ENCODE measurements at regions of chr20 and their contacts with region 1.

Region 1: DNA sequence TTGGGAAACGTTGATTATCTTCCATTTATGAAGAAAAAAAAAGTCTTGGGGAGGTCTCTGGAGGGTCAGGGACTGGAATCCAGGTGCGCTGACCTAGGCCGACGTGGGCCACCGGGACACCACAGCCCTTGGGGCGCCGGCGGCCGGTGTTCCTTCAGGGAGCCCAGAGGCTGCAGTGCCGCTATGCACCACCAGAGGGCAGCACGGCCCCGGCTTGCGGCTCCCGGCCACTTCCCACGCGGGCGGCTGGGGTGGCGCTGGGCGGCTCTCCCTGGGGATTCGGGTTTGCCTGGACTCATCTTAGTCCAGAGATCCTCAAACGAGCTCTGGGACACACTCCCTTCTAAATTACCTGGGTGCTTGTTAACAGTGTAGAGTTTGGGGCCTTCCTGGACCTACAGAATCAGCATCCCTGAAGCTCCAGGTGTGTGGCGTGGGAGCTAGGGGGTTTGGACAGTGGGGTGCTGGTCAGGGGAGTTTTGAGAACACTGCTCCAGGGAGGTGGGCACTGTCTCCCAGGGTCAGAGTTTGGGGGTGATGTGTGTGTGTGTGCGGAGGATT is 23.0 kb upstream of the GTSF1L start:
- DNase-seq: peak; percentile 13
- ATAC-seq: peak; percentile 45
- H3K4me3 ChIP-seq: no peak overlapping the region
- H3K27ac ChIP-seq: peak overlapping the region; percentile 84
- H3K4me1 ChIP-seq: peaks cover 34% of the 10 kb centered on the region
- H3K27me3 ChIP-seq: no peaks in the 10 kb centered on the region
- CTCF ChIP-seq: peak; percentile 96 to 99 (median 98); a peak in 5 of 6 replicates
- EP300 ChIP-seq: no peak
- POLR2A ChIP-seq: no peak
- RAD21 ChIP-seq: peak; percentile 95

Region 2: DNA sequence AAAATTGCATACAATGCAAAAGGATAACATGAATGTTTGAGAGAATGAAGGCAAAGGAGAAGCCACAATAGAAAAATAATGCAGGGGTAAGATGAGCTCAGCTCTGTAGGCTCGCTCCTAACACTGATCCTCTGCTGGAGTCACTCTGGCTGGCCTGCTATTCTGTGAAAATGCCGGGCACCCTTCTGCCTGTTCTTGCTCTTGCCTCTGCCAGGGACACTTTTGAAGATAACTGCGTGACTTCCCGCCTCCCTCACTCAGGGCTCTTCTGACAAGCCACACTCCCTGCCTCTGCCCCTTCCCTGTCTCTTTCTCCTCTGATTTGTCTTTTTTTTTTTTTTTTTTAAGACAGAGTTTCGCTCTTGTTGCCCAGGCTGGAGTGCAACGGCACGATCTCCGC is 118.2 kb before region 1 on chr20:
- CTCF ChIA-PET with region 1: no interaction called
- POLR2A ChIA-PET with region 1: no interaction called
- RAD21 ChIA-PET with region 1: no interaction called
- SMC1A ChIA-PET with region 1: no interaction called
- in situ Hi-C with region 1: no loop called
- intact Hi-C with region 1: no loop called
- DNase-seq: no peak
- ATAC-seq: no peak
- H3K4me3 ChIP-seq: no peak overlapping the region
- H3K27ac ChIP-seq: no peak overlapping the region
- H3K4me1 ChIP-seq: no peaks in the 10 kb centered on the region
- H3K27me3 ChIP-seq: no peaks in the 10 kb centered on the region
- CTCF ChIP-seq: no peak
- EP300 ChIP-seq: no peak
- POLR2A ChIP-seq: no peak
- RAD21 ChIP-seq: no peak

Region 3: DNA sequence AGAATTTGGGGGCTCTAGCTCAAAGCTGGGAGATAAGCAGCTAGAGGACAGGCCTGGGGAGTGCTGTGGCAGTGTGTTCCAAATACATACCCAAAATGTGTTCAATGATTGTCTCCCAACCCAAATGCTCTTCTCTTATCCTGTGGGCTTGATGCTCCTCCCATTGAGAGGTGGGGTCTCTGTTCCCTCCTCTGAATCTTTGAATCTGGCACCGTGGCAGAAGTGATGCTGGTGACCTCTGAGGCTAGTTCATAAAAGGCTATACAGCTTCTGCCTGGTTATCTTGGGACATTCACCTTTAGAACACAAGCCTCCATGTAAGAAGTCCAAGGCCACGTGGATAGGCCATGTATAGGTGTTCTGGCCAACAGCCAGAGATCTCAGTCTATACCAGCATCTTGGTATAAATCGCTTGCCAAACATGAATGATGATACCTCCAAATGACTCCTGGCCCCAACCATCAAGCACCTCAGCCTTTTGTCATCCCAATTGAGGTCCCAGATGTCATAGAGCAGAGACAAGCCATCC is 98.8 kb before region 1 on chr20:
- CTCF ChIA-PET with region 1: no interaction called
- POLR2A ChIA-PET with region 1: no interaction called
- RAD21 ChIA-PET with region 1: no interaction called
- SMC1A ChIA-PET with region 1: no interaction called
- in situ Hi-C with region 1: no loop called
- intact Hi-C with region 1: no loop called
- DNase-seq: no peak
- ATAC-seq: no peak
- H3K4me3 ChIP-seq: no peak overlapping the region
- H3K27ac ChIP-seq: no peak overlapping the region
- H3K4me1 ChIP-seq: peaks cover 2% of the 10 kb centered on the region; the same call in 1 of the 2 replicates
- H3K27me3 ChIP-seq: no peaks in the 10 kb centered on the region
- CTCF ChIP-seq: no peak
- EP300 ChIP-seq: no peak
- POLR2A ChIP-seq: no peak
- RAD21 ChIP-seq: no peak

Region 4: GRCh38 chr20:43681468-43681942 is 68.3 kb before region 1 on chr20:
- CTCF ChIA-PET with region 1: interaction called, 5 read pairs
- POLR2A ChIA-PET with region 1: no interaction called
- RAD21 ChIA-PET with region 1: interaction called, 11 read pairs
- SMC1A ChIA-PET with region 1: interaction called, 4 read pairs
- in situ Hi-C with region 1: no loop called
- intact Hi-C with region 1: no loop called
- DNase-seq: peak; percentile 21
- ATAC-seq: peak; percentile 70
- H3K4me3 ChIP-seq: peak overlapping the region; percentile 68
- H3K27ac ChIP-seq: peak overlapping the region; percentile 89
- H3K4me1 ChIP-seq: peaks cover 32% of the 10 kb centered on the region
- H3K27me3 ChIP-seq: no peaks in the 10 kb centered on the region
- CTCF ChIP-seq: peak; percentile 21 to 42 (median 40); a peak in 5 of 6 replicates
- EP300 ChIP-seq: no peak
- POLR2A ChIP-seq: 0 out of 2 replicates have a peak, but pooled peaks have one; percentile 23
- RAD21 ChIP-seq: 0 out of 2 replicates have a peak, but pooled peaks have one; percentile 14

Region 5: GRCh38 chr20:43799150-43799711 is 49.4 kb after region 1 on chr20:
- CTCF ChIA-PET with region 1: interaction called, 4 read pairs
- POLR2A ChIA-PET with region 1: no interaction called
- RAD21 ChIA-PET with region 1: interaction called, 12 read pairs
- SMC1A ChIA-PET with region 1: interaction called, 10 read pairs
- in situ Hi-C with region 1: no loop called
- intact Hi-C with region 1: no loop called
- DNase-seq: no peak
- ATAC-seq: peak; percentile 88
- H3K4me3 ChIP-seq: no peak overlapping the region
- H3K27ac ChIP-seq: peak overlapping the region; percentile 7; the same call in 1 of the 2 replicates
- H3K4me1 ChIP-seq: peaks cover 23% of the 10 kb centered on the region
- H3K27me3 ChIP-seq: no peaks in the 10 kb centered on the region
- CTCF ChIP-seq: no peak
- EP300 ChIP-seq: no peak
- POLR2A ChIP-seq: no peak
- RAD21 ChIP-seq: no peak

Region 6: GRCh38 chr20:43914311-43915210 is 164.7 kb after region 1 on chr20 and contains the start of gene TOX2:
- CTCF ChIA-PET with region 1: interaction called, 40 read pairs
- POLR2A ChIA-PET with region 1: interaction called, 9 read pairs
- RAD21 ChIA-PET with region 1: interaction called, 57 read pairs
- SMC1A ChIA-PET with region 1: interaction called, 53 read pairs
- in situ Hi-C with region 1: no loop called
- intact Hi-C with region 1: loop called (anchors 2 kb)
- DNase-seq: no peak
- ATAC-seq: peak; percentile 43
- H3K4me3 ChIP-seq: peak within 1 kb of the TSS; percentile 68; the same call in 1 of the 2 replicates
- H3K27ac ChIP-seq: peak within 1 kb of the TSS; percentile 28; the same call in 1 of the 2 replicates
- H3K4me1 ChIP-seq: peaks cover 18% of the 10 kb centered on the region
- H3K27me3 ChIP-seq: peaks cover 0 to 4% of the 10 kb centered on the region in 2 experiments; a peak in 2 of 4 replicates
- CTCF ChIP-seq: no peak
- EP300 ChIP-seq: no peak
- POLR2A ChIP-seq: no peak; the same call in 1 of the 2 replicates
- RAD21 ChIP-seq: no peak
- polyA plus RNA-seq, gene TOX2: 2.6 to 6.2 TPM

Region 7: DNA sequence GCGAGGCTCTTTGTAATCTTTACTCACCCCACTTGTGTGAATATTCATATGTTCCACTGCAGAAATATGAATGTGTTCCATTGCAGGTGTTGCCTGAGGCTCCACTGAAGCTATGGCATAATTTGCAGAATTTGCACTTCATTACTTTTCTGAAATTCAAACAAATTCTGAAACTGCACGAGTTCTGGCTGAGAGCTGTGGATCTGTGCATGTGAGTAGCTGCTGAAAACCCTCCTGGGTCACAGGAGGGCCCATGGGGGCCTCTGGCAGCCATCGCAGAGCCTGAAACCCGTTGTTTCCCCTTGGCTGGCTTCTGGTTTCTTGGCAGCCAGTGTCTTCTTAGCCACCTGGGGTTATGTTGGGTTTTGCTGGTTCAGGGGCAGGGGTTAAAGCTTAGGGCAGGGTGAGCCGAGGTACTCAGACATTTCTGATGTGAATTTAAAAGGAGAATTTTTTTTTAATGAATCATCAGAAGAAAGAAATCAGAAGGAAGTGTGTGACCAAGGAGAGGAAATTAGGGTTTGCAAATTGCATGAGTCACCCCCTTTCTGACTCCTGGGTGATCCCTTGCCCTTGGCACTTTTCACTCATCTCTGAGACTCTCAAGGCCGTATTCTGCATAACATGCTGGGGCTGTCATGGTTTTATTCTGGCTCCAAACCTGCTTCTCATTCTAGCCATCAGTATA is 205.4 kb after region 1 on chr20:
- CTCF ChIA-PET with region 1: interaction called, 7 read pairs
- POLR2A ChIA-PET with region 1: no interaction called
- RAD21 ChIA-PET with region 1: interaction called, 24 read pairs
- SMC1A ChIA-PET with region 1: interaction called, 25 read pairs
- in situ Hi-C with region 1: no loop called
- intact Hi-C with region 1: loop called (anchors 2 kb)
- DNase-seq: peak; percentile 73
- ATAC-seq: peak; percentile 85
- H3K4me3 ChIP-seq: 0 out of 2 replicates have a peak overlapping the region, but pooled peaks have one; percentile 11
- H3K27ac ChIP-seq: peak overlapping the region; percentile 9
- H3K4me1 ChIP-seq: peaks cover 40% of the 10 kb centered on the region
- H3K27me3 ChIP-seq: no peaks in the 10 kb centered on the region
- CTCF ChIP-seq: no peak
- EP300 ChIP-seq: 0 out of 4 replicates have a peak, but pooled peaks of 1 of the 2 experiments have one; percentile 5
- POLR2A ChIP-seq: no peak
- RAD21 ChIP-seq: no peak

Region 8: DNA sequence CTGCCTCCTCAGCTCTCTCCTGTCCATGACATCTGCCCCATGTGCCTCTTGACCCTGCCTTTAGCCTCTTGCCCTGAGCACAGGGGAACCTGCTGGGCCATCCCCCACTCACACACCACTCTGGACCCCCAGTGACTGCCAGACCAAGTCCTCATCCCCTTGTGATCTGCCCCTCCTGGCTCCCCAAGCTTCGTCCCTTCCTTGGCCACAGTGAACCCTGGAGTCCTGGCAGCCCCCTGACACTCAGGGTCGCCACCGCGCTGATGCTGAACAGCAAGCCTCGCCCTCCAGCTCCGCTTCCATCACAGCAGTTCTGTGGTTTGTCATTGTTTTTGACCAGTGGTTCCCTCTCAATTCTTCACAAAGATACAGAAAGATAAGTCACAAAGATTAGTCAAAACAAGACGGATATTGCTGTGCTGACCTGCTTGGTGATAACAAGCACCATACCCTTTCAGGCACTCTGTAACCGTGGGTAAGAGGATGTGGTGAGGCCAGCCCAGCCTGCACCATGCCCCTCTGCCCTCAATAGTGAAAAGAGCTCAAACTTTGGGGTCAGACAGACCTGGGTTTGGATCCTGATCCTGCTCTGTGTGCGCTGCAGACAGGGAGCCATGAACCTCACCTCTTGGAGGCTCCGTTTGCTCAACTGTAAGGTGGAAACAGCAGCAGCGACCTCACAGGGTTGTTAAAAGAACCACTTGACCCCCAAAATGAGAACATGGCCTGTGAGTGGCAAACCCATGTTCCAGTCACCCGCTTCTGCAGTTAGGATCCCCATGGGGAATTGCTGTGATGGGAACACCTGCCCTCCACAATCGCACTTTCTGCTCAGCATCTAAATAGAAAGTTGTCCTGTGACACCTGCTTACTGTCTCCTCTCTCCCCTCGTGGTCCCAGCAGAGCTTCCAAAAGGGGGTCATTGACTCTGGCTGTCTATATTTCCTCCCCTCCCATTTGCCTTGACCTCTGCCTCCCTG is 279.3 kb after region 1 on chr20:
- CTCF ChIA-PET with region 1: interaction called, 5 read pairs
- POLR2A ChIA-PET with region 1: no interaction called
- RAD21 ChIA-PET with region 1: interaction called, 14 read pairs
- SMC1A ChIA-PET with region 1: interaction called, 7 read pairs
- in situ Hi-C with region 1: no loop called
- intact Hi-C with region 1: no loop called
- DNase-seq: peak; percentile 66
- ATAC-seq: peak; percentile 96
- H3K4me3 ChIP-seq: no peak overlapping the region
- H3K27ac ChIP-seq: peak overlapping the region; percentile 35; the same call in 1 of the 2 replicates
- H3K4me1 ChIP-seq: peaks cover 21% of the 10 kb centered on the region
- H3K27me3 ChIP-seq: no peaks in the 10 kb centered on the region
- CTCF ChIP-seq: no peak
- EP300 ChIP-seq: peak; percentile 56 to 58; a peak in 1 of 4 replicates
- POLR2A ChIP-seq: no peak
- RAD21 ChIP-seq: no peak

Region 9: GRCh38 chr20:44092551-44093248 is 342.9 kb after region 1 on chr20:
- CTCF ChIA-PET with region 1: interaction called, 27 read pairs
- POLR2A ChIA-PET with region 1: no interaction called
- RAD21 ChIA-PET with region 1: interaction called, 38 read pairs
- SMC1A ChIA-PET with region 1: interaction called, 55 read pairs
- in situ Hi-C with region 1: no loop called
- intact Hi-C with region 1: no loop called
- DNase-seq: no peak
- ATAC-seq: peak; percentile 81
- H3K4me3 ChIP-seq: no peak overlapping the region
- H3K27ac ChIP-seq: no peak overlapping the region
- H3K4me1 ChIP-seq: peaks cover 8% of the 10 kb centered on the region
- H3K27me3 ChIP-seq: no peaks in the 10 kb centered on the region
- CTCF ChIP-seq: peak; percentile 49 to 58 (median 53)
- EP300 ChIP-seq: no peak
- POLR2A ChIP-seq: no peak
- RAD21 ChIP-seq: peak; percentile 59